ENCODE measurements at regions of chrX and their contacts with region 1.

Region 1: DNA sequence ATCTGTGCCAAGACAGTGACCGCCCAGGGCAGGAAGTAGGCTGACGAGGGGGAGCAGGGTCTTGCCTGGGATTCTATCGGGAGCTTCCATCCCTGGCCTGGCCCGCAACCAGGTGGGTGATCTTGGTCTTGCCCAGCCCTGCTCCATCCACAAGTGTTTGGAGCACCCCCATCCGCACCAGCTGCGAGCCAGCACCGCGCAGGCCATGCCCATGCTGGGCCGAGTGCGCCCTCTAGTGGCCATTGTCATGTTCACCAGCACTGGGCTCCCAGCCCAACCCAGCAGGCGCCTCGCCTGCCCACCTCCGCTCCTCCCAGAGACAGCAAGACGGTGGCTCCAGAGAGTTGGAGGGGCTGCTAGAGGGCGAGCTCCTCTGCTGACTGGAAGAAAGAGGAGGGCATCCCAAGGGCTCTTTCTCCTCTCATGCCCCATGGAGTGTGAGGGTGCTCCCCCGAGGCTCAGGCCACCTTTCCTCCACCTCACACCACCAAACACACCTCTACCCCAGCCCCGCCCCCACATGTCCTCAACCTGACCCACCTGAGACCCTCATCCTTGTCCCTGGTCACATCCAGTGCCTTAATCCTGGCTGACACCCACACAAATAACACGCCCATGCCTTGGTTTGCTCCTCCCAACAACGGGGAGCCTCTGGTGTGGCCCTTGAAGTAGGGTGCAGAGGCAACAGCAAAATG is 9.8 kb upstream of the ATP2B3 start:
- DNase-seq: peak; percentile 65 to 77 (median 75)
- H3K4me3 ChIP-seq: no peak overlapping the region
- H3K4me3 Mint-ChIP-seq: no peak overlapping the region
- H3K27ac ChIP-seq: no peak overlapping the region
- H3K27ac Mint-ChIP-seq: peak overlapping the region in 1 of 7 donors; percentile 42
- H3K4me1 ChIP-seq: no peaks in the 10 kb centered on the region
- H3K4me1 Mint-ChIP-seq: peaks cover 0 to 7% (median 3%) of the 10 kb centered on the region in 4 donors
- H3K27me3 ChIP-seq: no peaks in the 10 kb centered on the region
- H3K27me3 Mint-ChIP-seq: no peaks in the 10 kb centered on the region

Region 2: DNA sequence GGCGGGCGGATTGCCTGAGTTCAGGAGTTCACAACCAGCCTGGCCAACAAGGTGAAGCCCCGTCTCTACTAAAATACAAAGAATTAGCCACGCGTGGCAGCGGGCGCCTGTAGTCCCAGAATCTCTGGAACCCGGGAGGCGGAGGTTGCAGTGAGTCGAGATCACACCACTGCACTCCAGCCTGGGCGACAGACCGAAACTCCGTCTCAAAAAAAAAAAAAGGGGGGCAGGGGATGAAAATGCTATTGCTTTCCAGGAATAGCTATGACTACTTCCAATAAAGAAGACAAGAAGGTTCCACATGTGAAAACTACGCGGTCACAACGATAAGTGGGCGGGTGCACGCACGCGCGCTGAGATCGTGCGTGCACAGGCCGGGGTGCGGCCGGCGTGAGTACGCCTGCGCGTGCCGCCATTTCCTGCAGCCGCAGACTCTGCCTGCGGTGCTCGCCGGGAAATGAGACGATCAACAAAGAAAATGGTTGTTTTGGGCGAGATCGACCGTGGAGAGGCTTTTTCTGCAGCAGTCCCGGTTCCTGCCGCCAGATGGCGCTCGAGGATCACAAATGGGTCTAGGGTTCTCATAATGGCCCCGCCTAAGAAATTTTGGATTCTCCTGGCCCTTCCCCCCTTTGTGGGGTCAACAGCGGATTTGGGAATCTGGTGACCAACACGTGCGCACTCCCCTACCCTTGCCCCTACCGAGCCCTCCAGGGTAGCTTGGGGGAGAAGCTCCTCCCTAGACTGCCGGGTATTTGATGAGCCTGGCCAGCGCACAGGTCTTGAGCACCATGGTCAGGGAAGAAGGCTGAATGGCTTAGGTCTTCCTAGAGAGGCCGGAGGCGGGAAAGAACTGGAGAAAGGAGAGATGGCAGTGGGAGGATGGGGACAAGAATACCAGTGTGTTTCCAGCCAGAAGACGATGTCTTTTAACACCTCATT is 548.8 kb before region 1 on chrX:
- CTCF ChIA-PET with region 1: interaction called, 13 read pairs
- POLR2A ChIA-PET with region 1: interaction called, 6 read pairs
- intact Hi-C with region 1: no loop called
- DNase-seq: peak; percentile 90 to 93 (median 93)
- H3K4me3 ChIP-seq: peak overlapping the region in 1 of 2 donors; percentile 28
- H3K4me3 Mint-ChIP-seq: peak overlapping the region; percentile 39 to 86 (median 77)
- H3K27ac ChIP-seq: peak overlapping the region; percentile 31
- H3K27ac Mint-ChIP-seq: peak overlapping the region; percentile 84 to 96 (median 94)
- H3K4me1 ChIP-seq: peaks cover 7% of the 10 kb centered on the region
- H3K4me1 Mint-ChIP-seq: peaks cover 3 to 16% (median 7%) of the 10 kb centered on the region in 4 donors
- H3K27me3 ChIP-seq: no peaks in the 10 kb centered on the region
- H3K27me3 Mint-ChIP-seq: no peaks in the 10 kb centered on the region

Region 3: GRCh38 chrX:153400146-153401127 is 107.2 kb before region 1 on chrX:
- CTCF ChIA-PET with region 1: no interaction called
- POLR2A ChIA-PET with region 1: no interaction called
- intact Hi-C with region 1: loop called (anchors 5 kb)
- DNase-seq: peak; percentile 26 to 45 (median 39)
- H3K4me3 ChIP-seq: no peak overlapping the region
- H3K4me3 Mint-ChIP-seq: no peak overlapping the region
- H3K27ac ChIP-seq: no peak overlapping the region
- H3K27ac Mint-ChIP-seq: no peak overlapping the region
- H3K4me1 ChIP-seq: no peaks in the 10 kb centered on the region
- H3K4me1 Mint-ChIP-seq: peaks cover 0 to 3% (median 0%) of the 10 kb centered on the region in 4 donors
- H3K27me3 ChIP-seq: no peaks in the 10 kb centered on the region
- H3K27me3 Mint-ChIP-seq: no peaks in the 10 kb centered on the region

Region 4: GRCh38 chrX:153470435-153471363 is 36.9 kb before region 1 on chrX and contains the start of gene HAUS7:
- CTCF ChIA-PET with region 1: interaction called, 63 read pairs
- POLR2A ChIA-PET with region 1: interaction called, 3 read pairs
- intact Hi-C with region 1: loop called (anchors 1 kb)
- DNase-seq: peak; percentile 84 to 89 (median 87)
- H3K4me3 ChIP-seq: peak within 1 kb of the TSS; percentile 42 to 69
- H3K4me3 Mint-ChIP-seq: peak within 1 kb of the TSS; percentile 80 to 87 (median 83)
- H3K27ac ChIP-seq: peak within 1 kb of the TSS; percentile 59
- H3K27ac Mint-ChIP-seq: peak within 1 kb of the TSS; percentile 59 to 89 (median 82)
- H3K4me1 ChIP-seq: peaks cover 31% of the 10 kb centered on the region
- H3K4me1 Mint-ChIP-seq: peaks cover 6 to 21% (median 15%) of the 10 kb centered on the region in 4 donors
- H3K27me3 ChIP-seq: no peaks in the 10 kb centered on the region
- H3K27me3 Mint-ChIP-seq: no peaks in the 10 kb centered on the region
- total RNA-seq, gene HAUS7: 29.8 to 33.8 TPM

Measured in CD4-positive, alpha-beta memory T cell (primary cell).